ENCODE measurements at regions of chr19 and their contacts with region 1.

Region 1: GRCh38 chr19:46759817-46760333 is 13.6 kb upstream of the STRN4 start:
- DNase-seq: no peak
- H3K4me3 ChIP-seq: no peak overlapping the region
- H3K27ac ChIP-seq: no peak overlapping the region
- H3K4me1 ChIP-seq: no peaks in the 10 kb centered on the region
- CTCF ChIP-seq: no peak

Region 2: GRCh38 chr19:46732936-46733692 is 26.8 kb before region 1 on chr19:
- CTCF ChIA-PET with region 1: no interaction called
- POLR2A ChIA-PET with region 1: no interaction called
- intact Hi-C with region 1: no loop called
- DNase-seq: no peak
- H3K4me3 ChIP-seq: no peak overlapping the region
- H3K27ac ChIP-seq: no peak overlapping the region
- H3K4me1 ChIP-seq: no peaks in the 10 kb centered on the region
- CTCF ChIP-seq: no peak

Region 3: GRCh38 chr19:46821498-46822409 is 61.9 kb after region 1 on chr19:
- CTCF ChIA-PET with region 1: no interaction called
- POLR2A ChIA-PET with region 1: no interaction called
- intact Hi-C with region 1: loop called (anchors 5 kb)
- DNase-seq: peak; percentile 57
- H3K4me3 ChIP-seq: no peak overlapping the region
- H3K27ac ChIP-seq: no peak overlapping the region
- H3K4me1 ChIP-seq: peaks cover 31% of the 10 kb centered on the region
- CTCF ChIP-seq: no peak

Region 4: GRCh38 chr19:46990991-46991676 is 231.3 kb after region 1 on chr19:
- CTCF ChIA-PET with region 1: no interaction called
- POLR2A ChIA-PET with region 1: no interaction called
- intact Hi-C with region 1: loop called (anchors 5 kb)
- DNase-seq: peak; percentile 68
- H3K4me3 ChIP-seq: no peak overlapping the region
- H3K27ac ChIP-seq: no peak overlapping the region
- H3K4me1 ChIP-seq: peaks cover 14% of the 10 kb centered on the region
- CTCF ChIP-seq: peak; percentile 95